Activated CD4-positive, alpha-beta memory T cell treated with anti-CD3 and anti-CD28 coated beads for 36 hours (primary cell): ENCODE measurements at regions of chr3 and their contacts with region 1.

Region 1: DNA sequence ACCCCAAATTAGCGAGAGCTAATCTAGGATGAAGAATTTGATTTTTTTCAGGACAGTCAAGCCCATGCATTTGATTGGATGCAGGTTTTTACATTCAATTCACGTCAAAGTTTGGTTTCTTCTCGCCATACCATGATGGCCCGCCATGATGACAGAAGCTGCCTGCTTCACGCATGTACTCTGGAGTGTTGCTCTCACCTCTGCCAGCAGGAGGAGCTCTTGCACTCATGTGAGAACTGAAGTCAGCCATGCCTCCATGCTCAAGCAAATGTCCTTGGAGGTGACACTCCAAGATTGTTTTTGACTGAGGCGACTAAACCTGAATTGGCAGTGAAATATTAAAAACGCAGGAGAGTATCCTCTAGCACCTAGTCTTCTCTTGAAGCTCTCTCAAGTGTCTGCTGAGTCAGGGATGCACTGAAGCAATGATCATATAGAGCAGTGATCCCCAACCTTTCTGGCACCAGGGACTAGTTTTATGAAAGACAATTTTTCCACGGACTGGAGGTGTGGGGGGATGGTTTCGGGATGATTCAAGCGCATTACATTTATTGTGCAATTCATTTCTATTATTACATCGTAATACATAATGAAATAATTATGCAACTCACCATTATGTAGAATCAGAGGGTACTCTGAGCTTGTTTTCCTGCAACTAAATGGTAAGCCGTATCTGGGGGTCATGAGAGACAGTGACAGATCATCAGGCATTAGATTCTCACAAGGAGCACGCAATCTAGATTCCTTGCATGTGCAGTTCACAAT is 121.0 kb downstream of the SAMMSON start:
- DNase-seq: peak; percentile 72
- H3K4me3 Mint-ChIP-seq: no peak overlapping the region
- H3K27ac Mint-ChIP-seq: no peak overlapping the region
- H3K4me1 Mint-ChIP-seq: no peaks in the 10 kb centered on the region
- H3K27me3 Mint-ChIP-seq: peaks cover 2% of the 10 kb centered on the region

Region 2: DNA sequence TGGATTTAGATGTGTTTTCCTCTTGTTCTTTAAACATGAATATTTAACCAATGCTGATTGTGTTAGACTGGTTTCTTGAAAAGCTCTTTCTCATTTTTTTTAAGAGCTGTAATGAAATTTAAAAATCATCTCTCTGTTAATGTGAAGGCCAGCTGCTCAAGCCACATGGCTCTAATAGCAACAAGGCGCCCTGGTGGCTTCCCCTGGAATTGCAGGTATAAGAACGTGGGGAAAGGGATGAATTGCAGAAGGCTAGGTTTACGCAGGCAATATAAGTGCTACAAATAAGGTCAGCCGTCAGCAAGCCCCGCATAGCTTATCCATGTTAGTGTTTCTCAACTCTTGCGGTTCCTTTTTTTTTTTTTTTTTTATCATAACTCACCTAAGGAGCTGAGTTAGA is 12.5 kb before region 1 on chr3:
- CTCF ChIA-PET with region 1: interaction called, 15 read pairs
- POLR2A ChIA-PET with region 1: no interaction called
- intact Hi-C with region 1: no loop called
- DNase-seq: peak; percentile 15
- H3K4me3 Mint-ChIP-seq: no peak overlapping the region
- H3K27ac Mint-ChIP-seq: no peak overlapping the region
- H3K4me1 Mint-ChIP-seq: no peaks in the 10 kb centered on the region
- H3K27me3 Mint-ChIP-seq: peaks cover 3% of the 10 kb centered on the region

Region 3: DNA sequence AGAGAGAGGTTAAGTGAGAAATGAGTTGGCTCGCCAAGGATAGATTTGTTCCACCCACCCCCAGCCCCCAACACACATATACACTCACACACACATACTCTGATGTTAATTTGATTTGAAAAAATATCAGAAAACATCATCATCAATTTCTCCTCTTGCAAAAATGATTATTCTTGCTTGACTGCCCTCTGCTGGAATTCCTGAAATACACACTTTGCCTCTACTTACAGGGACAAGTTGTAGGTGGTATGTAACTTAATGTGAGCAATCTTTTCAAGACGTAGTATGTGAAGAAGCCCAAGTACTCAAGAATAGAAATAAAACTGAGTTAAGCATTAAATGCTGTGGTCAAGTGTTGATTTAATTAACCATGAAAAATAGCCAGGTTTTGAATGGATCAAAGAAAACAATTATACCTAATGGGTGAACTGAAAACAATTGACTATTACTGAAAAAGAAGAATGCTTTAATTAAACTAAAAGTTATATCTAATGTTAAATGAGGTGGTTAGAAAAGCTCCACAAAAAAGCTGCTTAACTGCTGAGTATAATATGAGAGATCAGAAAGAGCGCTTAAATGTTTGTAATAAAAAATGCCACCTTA is 238.5 kb after region 1 on chr3:
- CTCF ChIA-PET with region 1: interaction called, 13 read pairs
- POLR2A ChIA-PET with region 1: no interaction called
- intact Hi-C with region 1: loop called (anchors 2 kb)
- DNase-seq: no peak
- H3K4me3 Mint-ChIP-seq: no peak overlapping the region
- H3K27ac Mint-ChIP-seq: no peak overlapping the region
- H3K4me1 Mint-ChIP-seq: no peaks in the 10 kb centered on the region
- H3K27me3 Mint-ChIP-seq: no peaks in the 10 kb centered on the region